OCI-LY7 (cell line): ENCODE measurements at regions of chr3 and their contacts with region 1.

Region 1: GRCh38 chr3:179234199-179234598 is 16.7 kb downstream of the KCNMB3 start:
- DNase-seq: no peak
- H3K4me3 ChIP-seq: no peak overlapping the region
- H3K27ac ChIP-seq: no peak overlapping the region
- H3K4me1 ChIP-seq: no peaks in the 10 kb centered on the region
- CTCF ChIP-seq: no peak

Region 2: DNA sequence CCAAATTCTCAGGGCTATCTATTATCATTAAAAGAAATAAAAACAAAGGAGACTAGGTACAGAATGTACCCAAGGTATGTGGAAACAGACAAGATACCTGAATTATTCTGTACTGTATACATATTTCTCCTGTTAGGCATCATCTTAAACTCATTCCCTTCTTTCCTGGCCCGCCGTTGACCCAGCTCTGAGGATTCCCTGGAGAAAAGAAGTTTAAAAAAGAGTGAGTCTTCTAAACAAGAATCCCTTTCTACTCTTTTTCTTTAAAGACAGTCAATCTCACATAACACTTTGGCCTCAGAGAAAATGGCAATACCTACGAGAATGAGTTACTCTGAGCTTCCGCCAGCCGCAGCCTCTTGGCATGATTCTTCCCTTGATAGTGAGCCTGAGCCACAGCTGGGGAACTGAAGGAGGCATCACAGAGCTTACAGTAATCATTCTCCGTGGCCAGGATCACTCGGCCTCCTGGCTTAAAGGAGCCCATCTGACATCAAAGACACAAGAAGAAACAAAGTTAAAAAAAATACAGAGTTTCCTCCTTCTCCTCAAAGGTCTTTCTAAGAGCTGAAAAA is 206.8 kb before region 1 on chr3:
- CTCF ChIA-PET with region 1: no interaction called
- POLR2A ChIA-PET with region 1: no interaction called
- intact Hi-C with region 1: no loop called
- DNase-seq: no peak
- H3K4me3 ChIP-seq: no peak overlapping the region
- H3K27ac ChIP-seq: no peak overlapping the region
- H3K4me1 ChIP-seq: no peaks in the 10 kb centered on the region
- CTCF ChIP-seq: no peak

Region 3: DNA sequence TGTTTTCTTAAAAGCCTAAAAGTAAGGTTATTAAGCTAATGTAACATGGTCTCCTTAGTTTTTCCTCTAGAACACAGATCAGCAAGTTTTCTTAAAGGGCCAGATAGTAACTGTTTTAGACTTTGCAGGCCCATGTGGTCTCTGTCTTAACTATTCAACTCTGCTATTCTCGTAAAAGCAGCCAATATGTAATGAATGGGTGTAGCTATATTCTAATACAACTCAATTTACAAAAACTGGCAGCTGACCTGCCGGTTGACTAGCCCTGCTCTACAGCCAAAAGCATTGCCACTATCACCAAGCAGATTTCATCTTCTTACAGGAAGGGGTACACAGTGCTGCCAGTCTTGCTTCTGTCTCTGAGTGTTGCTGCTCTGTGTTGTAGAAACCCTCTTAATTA is 10.7 kb before region 1 on chr3:
- CTCF ChIA-PET with region 1: no interaction called
- POLR2A ChIA-PET with region 1: interaction called, 12 read pairs
- intact Hi-C with region 1: no loop called
- DNase-seq: no peak
- H3K4me3 ChIP-seq: no peak overlapping the region
- H3K27ac ChIP-seq: no peak overlapping the region
- H3K4me1 ChIP-seq: no peaks in the 10 kb centered on the region
- CTCF ChIP-seq: no peak

Region 4: DNA sequence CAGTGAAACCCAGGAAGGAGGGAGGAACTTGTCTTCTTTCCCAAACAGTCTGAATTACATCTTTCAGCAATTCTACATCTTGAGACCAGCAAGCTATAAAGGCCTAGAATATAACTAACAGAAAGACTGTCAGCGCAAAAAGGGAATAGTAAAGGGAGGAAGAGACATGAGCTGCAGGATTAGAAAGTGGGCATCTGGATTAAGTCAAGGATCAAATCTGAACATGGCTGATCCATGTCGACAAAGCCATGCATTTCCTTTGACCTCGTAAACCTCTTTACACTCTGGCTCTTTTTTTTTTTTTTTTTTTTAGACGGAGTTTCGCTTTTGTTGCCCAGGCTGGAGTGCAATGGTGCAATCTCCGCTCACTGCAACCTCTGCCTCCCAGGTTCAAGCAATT is 52.1 kb after region 1 on chr3:
- CTCF ChIA-PET with region 1: no interaction called
- POLR2A ChIA-PET with region 1: no interaction called
- intact Hi-C with region 1: no loop called
- DNase-seq: no peak
- H3K4me3 ChIP-seq: no peak overlapping the region
- H3K27ac ChIP-seq: no peak overlapping the region
- H3K4me1 ChIP-seq: no peaks in the 10 kb centered on the region
- CTCF ChIP-seq: no peak